ENCODE measurements at regions of chr19 and their contacts with region 1.

Region 1: DNA sequence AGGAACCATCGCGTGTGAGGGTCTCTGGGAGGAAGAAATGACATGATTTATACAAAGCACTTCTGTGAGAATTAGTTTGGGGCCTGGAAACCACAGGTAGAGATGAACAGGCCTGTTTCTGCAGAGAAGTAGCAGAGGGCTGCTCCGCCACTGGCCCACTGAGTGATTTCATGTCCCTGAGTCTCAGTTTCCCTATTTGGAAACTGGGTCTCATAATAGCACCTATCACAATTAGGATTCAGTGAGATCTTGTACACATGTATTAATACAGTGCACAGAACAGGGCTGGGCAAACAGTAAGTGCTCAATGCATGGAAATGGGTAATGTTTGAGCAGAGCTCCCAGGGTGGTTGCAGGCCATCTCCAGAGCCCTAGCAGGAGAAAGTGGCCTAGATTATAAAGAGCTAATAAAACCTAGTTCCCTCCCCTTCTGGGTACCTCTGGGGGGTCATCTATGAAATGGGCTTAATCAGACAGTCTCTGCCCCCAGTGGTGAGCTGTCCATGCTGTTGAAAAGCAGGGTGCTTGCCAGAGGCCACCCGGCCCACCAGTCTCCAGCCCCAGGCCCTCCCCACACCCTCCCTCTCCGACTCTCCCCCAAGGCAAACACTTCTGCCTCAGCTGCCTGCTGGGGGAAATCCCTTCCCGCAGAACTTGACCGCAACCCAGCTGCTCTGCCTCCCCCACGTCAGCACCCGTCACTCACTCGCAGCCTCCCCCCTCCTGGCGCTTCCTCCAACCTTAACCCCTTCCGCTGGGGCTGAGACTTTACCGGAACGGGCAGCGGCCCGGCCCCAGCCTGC is 4.5 kb downstream of the BCL3 start:
- DNase-seq: peak; percentile 87
- ATAC-seq: peak; percentile 76
- H3K4me3 Mint-ChIP-seq: peak overlapping the region; percentile 95
- H3K27ac Mint-ChIP-seq: peak overlapping the region; percentile 96
- H3K4me1 Mint-ChIP-seq: peaks cover 68% of the 10 kb centered on the region
- H3K27me3 Mint-ChIP-seq: no peaks in the 10 kb centered on the region
- CTCF ChIP-seq: no peak

Region 2: GRCh38 chr19:44741841-44742352 is 11.1 kb before region 1 on chr19:
- CTCF ChIA-PET with region 1: no interaction called
- POLR2A ChIA-PET with region 1: interaction called, 28 read pairs
- intact Hi-C with region 1: no loop called
- DNase-seq: no peak
- ATAC-seq: peak; percentile 70
- H3K4me3 Mint-ChIP-seq: no peak overlapping the region
- H3K27ac Mint-ChIP-seq: peak overlapping the region; percentile 56
- H3K4me1 Mint-ChIP-seq: peaks cover 29% of the 10 kb centered on the region
- H3K27me3 Mint-ChIP-seq: no peaks in the 10 kb centered on the region
- CTCF ChIP-seq: no peak

Region 3: DNA sequence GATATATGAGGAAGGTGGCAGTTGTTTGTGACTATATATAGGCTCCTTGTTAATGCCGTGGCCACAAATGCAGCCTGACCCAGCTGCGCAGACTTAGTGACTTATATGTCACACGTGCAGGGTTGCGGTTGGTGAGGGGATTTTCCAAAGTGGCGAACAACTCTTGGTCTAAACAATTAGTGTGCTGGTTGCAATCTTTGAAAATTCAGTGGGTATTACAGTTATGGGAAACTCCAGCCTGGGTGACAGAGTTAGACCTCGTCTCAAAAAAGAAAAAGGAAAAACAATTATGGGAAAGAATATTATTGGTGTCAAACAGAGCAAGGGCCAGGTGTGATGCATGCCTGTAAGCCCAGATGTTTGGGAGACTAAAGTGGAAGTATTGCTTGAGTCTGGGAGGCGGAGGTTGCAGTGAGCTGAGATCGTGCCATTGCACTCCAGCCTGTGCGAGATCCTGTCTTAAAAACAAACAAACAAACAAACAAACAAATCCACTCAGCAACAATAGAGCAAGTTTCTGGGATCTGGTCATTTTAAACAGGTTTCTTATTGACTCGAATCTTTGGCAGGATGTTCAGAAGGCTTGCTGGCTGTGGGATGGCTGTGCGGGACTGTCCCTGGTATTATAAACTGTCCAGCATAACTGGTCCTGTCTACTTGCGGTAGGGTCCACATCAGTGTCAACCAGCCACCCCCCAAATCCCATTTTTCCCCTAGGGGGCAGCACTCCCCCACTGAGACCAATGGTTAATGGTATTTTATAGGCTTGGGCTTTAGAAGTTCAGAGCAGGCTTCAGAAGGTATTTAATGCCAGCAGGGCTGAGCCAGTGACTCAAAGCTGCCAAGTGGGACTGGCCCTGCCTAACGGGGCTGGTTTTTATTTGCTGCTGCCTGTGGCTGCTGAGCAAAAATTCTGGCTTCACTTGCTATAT is 263.6 kb after region 1 on chr19:
- CTCF ChIA-PET with region 1: no interaction called
- POLR2A ChIA-PET with region 1: no interaction called
- intact Hi-C with region 1: loop called (anchors 5 kb)
- DNase-seq: peak; percentile 62
- ATAC-seq: peak; percentile 81
- H3K4me3 Mint-ChIP-seq: peak overlapping the region; percentile 64
- H3K27ac Mint-ChIP-seq: peak overlapping the region; percentile 89
- H3K4me1 Mint-ChIP-seq: peaks cover 22% of the 10 kb centered on the region
- H3K27me3 Mint-ChIP-seq: no peaks in the 10 kb centered on the region
- CTCF ChIP-seq: no peak

Region 4: DNA sequence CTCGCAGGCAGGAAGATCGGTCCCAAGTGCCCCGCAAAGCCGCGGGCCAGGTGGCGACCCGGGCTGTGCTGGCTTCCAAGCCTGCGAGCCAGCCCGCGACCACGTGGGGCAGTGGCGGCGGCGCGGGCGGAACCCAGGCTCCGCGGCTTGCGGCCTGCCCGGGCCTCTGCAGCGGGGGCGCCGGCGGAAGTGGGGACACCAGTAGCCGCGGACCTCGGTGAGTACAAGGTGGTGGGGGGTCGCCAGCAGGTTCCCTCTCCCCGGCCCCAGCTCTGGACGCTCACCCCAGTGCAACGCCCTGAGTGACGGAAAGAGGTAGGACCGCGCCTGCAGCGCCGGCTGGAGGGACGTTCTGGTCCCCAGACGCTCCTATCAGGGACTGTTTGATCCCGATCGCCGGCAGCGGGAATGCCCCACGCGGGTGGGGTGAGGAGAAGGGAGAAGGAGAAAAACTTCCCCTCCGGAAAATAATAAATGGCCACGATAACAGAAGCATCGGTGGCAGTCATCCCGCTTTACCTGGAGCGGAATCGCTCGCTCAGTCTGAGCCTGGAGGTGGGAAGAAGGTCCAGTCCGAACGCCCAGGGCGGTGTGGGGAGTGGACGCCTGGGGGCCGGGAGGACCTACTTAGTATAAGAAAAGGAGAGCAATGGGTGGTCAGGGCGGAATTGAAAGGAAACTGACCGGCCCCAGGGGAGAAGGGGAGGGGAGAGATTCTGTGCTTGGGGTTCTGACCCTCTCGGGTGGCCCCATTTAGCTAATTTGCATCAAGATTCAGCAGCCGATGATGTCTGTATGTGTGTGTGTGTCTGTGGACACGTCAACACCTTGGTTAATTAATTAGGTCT is 326.3 kb after region 1 on chr19 and contains the start of gene GEMIN7:
- CTCF ChIA-PET with region 1: no interaction called
- POLR2A ChIA-PET with region 1: no interaction called
- intact Hi-C with region 1: loop called (anchors 5 kb)
- DNase-seq: peak; percentile 85
- ATAC-seq: peak; percentile 33
- H3K4me3 Mint-ChIP-seq: peak within 1 kb of the TSS; percentile 97
- H3K27ac Mint-ChIP-seq: peak within 1 kb of the TSS; percentile 90
- H3K4me1 Mint-ChIP-seq: peaks cover 60% of the 10 kb centered on the region
- H3K27me3 Mint-ChIP-seq: no peaks in the 10 kb centered on the region
- CTCF ChIP-seq: no peak
- total RNA-seq, gene GEMIN7: 37.0 and 38.7 TPM in 2 replicates

Region 5: GRCh38 chr19:45584332-45585157 is 831.5 kb after region 1 on chr19 and contains the start of gene OPA3:
- CTCF ChIA-PET with region 1: no interaction called
- POLR2A ChIA-PET with region 1: no interaction called
- intact Hi-C with region 1: loop called (anchors 1 kb)
- DNase-seq: peak; percentile 94
- ATAC-seq: peak; percentile 89
- H3K4me3 Mint-ChIP-seq: peak within 1 kb of the TSS; percentile 96
- H3K27ac Mint-ChIP-seq: peak within 1 kb of the TSS; percentile 98
- H3K4me1 Mint-ChIP-seq: peaks cover 13% of the 10 kb centered on the region
- H3K27me3 Mint-ChIP-seq: peaks cover 5% of the 10 kb centered on the region
- CTCF ChIP-seq: no peak
- total RNA-seq, gene OPA3: 12.0 and 14.4 TPM in 2 replicates